KBM-7 (cell line): ENCODE measurements at regions of chr20 and their contacts with region 1.

Region 1: DNA sequence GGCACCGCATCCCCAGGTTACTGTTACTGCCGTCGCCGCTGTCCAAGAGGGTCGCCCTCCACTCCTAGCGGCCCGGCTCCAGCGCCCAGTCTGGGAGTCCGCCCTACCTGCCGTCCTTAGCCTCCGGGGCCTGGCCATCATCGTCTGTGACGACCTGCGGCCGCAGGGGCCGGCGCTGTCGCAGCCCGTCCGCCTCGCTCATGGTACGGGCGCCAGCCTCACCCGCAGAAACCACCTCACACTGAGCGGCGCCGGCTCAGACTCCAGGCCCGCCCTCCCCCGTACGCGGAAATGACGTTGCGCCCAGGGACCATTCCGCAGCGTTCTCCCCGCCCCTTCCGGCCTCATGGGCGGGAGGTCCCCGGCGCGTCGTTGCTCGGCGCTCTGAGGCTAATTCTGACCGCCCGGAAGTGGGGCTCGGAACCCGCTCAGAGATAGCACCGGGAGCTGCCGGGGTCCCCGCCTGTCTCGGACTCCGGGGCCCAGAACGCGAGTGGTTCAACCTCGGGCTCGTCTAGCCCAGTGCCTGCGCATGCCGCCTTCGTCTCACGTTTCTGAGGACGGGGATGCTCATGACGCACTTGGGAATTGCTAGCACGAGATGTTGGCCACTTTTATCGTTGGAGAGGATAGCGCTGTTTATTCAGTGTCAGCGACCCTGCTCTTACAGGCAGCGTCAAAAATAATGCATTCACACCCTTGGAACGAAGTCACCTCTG is at the start of gene APMAP:
- DNase-seq: peak; percentile 93

Region 2: GRCh38 chr20:25065625-25066338 is 73.1 kb after region 1 on chr20:
- in situ Hi-C with region 1: loop called (anchors 10 kb)
- DNase-seq: peak; percentile 89

Region 3: DNA sequence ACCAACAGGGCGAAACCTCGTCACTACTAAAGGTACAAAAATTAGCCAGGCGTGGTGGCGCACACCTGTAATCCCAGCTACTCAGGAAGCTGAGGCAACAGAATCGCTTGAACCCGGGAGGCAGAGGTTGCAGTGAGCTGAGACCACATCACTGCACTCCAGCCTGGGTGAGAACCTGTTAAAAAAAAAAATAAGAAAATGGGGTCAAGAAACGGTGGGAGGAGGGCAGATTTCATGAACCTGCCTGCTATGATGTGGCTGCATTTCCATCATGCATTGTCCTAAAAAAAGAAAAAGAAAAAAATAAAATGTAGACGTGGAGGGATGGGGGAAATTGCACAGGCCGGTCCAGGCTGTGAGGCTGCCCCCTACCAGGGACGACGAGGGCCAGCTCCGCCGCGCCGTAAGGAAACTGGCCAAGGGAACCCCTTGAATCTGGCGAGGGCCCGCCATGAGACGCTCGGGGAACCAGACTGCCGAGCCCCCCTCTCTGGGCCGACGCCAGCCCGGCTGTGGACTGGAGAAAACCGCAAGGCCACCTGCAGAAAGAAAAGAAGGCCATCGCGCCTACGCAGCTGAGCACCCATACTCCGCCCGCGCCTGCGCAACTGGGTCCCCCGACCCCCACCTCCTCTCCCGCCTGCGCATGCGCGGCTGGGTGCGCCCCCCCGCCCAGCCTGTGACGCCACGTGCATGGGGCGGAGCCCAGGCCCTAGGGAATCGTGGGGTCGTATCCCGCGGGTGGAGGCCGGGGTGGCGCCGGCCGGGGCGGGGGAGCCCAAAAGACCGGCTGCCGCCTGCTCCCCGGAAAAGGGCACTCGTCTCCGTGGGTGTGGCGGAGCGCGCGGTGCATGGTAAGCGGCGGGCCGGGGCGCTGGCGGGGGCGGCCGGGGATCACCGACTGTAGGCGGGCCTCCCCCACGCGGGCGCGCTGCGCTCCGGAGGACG is 202.6 kb after region 1 on chr20 and contains the start of gene ENTPD6:
- in situ Hi-C with region 1: loop called (anchors 25 kb)
- DNase-seq: peak; percentile 76